Colonic mucosa (tissue), 4 donors: ENCODE measurements at regions of chr11 and their contacts with region 1.

Region 1: GRCh38 chr11:46489661-46490560 is 98.3 kb upstream of the CHRM4 start:
- DNase-seq: peak; percentile 40
- H3K4me3 ChIP-seq: no peak overlapping the region
- H3K27ac ChIP-seq: no peak overlapping the region
- H3K4me1 ChIP-seq: peaks cover 17% of the 10 kb centered on the region
- H3K27me3 ChIP-seq: no peaks in the 10 kb centered on the region
- CTCF ChIP-seq: peak; percentile 39

Region 2: DNA sequence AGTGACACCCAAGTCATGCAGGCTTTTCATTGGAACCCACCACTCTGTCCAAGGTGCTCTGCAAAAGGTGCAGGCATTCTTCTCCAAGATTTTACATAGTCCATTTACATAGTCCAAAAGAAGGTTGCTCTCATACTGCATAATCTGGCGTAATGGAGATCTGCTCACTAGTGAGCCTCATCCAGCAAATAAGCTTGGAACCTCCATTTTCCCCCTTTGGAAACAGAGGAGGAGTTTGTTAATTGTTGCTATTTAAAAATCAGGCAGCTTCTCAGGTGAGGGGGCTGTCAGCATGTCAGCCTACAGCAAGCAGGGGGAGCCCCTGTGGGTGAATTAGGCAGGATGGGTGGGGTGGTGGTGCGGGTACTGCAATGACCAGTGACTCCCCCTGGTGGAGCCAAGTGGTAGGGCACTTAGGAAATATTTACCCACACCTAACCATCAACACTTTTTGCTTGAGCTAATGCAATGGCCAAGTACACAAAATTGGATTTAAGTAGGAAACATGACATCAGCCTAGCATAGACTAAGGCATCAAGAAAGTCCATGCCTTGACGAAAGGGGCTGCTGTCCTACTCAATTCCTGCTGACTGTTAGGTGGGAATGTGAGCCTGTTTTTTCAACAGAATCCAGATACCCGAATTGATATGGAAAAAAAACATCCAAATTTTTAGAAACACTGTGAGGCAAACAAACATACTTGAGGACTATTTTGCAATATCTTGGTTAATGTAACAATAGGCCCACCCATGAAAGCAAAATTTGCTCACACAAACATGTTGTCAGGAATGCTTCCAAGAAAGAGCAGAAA is 39.4 kb after region 1 on chr11:
- intact Hi-C with region 1: loop called (anchors 5 kb)
- DNase-seq: peak; percentile 77
- H3K4me3 ChIP-seq: no peak overlapping the region
- H3K27ac ChIP-seq: no peak overlapping the region
- H3K4me1 ChIP-seq: peaks cover 4% of the 10 kb centered on the region
- H3K27me3 ChIP-seq: no peaks in the 10 kb centered on the region
- CTCF ChIP-seq: peak; percentile 93

Region 3: GRCh38 chr11:46560300-46560991 is 70.5 kb after region 1 on chr11:
- intact Hi-C with region 1: no loop called
- DNase-seq: peak; percentile 53
- H3K4me3 ChIP-seq: peak overlapping the region; percentile 5
- H3K27ac ChIP-seq: peak overlapping the region; percentile 75
- H3K4me1 ChIP-seq: peaks cover 6% of the 10 kb centered on the region
- H3K27me3 ChIP-seq: no peaks in the 10 kb centered on the region
- CTCF ChIP-seq: no peak